Ascending aorta (tissue), 2 donors: ENCODE measurements at regions of chr6 and their contacts with region 1.

Region 1: GRCh38 chr6:157274471-157275226 is 48.7 kb downstream of the TMEM242 start:
- DNase-seq: peak; percentile 53 to 91
- H3K4me3 ChIP-seq: peak overlapping the region; percentile 75 to 86
- H3K27ac ChIP-seq: peak overlapping the region; percentile 97 to 98
- H3K4me1 ChIP-seq: peaks cover under 1 to 24% of the 10 kb centered on the region in 2 donors
- H3K27me3 ChIP-seq: no peaks in the 10 kb centered on the region
- CTCF ChIP-seq: peak in 2 of 3 experiments; percentile 49 to 99

Region 2: DNA sequence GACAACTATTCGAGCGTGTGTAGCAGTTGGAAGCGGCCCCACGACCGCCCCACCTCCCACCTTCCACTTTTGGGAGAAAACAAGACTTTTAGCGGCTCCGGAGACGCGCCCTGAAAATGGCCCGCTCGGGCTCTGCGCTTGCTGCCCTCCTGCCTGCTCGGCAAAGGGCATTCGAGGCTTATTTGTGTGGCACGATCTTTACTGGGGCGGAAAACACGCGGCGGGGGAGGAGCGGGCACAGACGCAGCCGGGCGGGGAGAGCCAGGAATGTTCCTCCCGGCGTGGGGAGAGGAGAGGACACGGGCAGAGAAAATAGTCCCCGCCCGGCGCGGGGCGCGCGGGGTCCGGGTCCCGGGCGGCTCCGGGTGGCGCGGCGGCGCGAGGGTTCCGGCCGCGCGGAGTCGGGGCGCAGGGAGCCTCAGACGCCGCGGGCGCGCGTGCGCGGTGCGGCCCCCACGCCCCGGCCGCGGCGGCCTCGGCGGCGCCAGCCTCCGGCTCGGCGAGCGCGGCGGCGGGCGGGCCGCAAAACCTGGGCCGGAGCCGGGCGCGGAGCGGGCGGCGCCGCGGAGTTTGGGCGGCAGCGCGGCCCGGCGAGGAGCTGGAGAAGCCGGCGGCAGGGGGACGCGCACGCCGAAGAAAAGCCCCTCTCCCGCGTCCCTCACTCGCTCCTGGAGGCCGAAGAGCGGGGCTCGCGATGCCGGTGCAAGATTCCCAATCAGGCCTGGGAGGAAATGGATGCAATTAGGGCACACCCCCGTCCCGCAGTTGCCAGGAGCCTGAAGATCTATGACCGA is 587.5 kb before region 1 on chr6:
- intact Hi-C with region 1: loop called (anchors 2 kb)
- DNase-seq: peak; percentile 77 to 97
- H3K4me3 ChIP-seq: peak overlapping the region; percentile 71 to 93
- H3K27ac ChIP-seq: peak overlapping the region; percentile 97
- H3K4me1 ChIP-seq: peaks cover 0 to 6% of the 10 kb centered on the region in 2 donors
- H3K27me3 ChIP-seq: no peaks in the 10 kb centered on the region
- CTCF ChIP-seq: no peak

Region 3: GRCh38 chr6:157034436-157035230 is 240.0 kb before region 1 on chr6:
- intact Hi-C with region 1: loop called (anchors 1 kb)
- DNase-seq: no peak
- H3K4me3 ChIP-seq: no peak overlapping the region
- H3K27ac ChIP-seq: no peak overlapping the region
- H3K4me1 ChIP-seq: peaks cover 4 to 39% of the 10 kb centered on the region in 2 donors
- H3K27me3 ChIP-seq: no peaks in the 10 kb centered on the region
- CTCF ChIP-seq: peak; percentile 54 to 62 (median 61)

Region 4: DNA sequence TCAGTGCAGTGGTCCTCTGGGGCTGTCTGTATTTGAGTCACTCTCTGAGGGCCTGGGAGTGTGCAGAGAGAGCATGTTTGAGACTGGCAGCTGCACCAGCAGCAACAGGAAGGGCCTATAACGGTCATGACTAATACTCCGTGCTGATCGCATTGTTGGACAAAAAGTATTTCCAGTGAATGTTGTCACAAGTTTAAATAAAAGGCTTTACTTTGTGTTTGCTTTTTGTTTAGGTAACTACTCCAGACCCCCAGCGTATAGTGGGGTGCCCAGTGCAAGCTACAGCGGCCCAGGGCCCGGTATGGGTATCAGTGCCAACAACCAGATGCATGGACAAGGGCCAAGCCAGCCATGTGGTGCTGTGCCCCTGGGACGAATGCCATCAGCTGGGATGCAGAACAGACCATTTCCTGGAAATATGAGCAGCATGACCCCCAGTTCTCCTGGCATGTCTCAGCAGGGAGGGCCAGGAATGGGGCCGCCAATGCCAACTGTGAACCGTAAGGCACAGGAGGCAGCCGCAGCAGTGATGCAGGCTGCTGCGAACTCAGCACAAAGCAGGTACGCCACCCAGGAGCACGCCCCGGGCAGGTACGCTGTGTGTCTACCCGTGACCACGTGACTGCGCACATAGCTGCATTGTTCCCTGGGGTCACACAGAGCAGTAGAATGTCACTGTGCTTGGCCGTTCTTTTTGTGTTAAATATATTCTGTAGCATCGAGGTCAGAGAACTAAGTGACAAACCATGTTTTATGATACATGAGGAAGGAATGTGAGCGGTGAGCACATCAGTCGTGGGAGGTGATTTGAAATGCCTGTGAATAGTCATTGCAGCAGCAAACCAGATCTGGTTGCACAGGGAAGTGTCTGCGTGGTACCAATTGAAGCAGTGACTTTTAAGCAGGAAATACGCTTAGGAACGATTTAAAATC is 126.0 kb before region 1 on chr6:
- intact Hi-C with region 1: loop called (anchors 2 kb)
- DNase-seq: peak; percentile 42 to 89
- H3K4me3 ChIP-seq: peak overlapping the region; percentile 28 to 33
- H3K27ac ChIP-seq: peak overlapping the region; percentile 87 to 88
- H3K4me1 ChIP-seq: peaks cover 19 to 51% of the 10 kb centered on the region in 2 donors
- H3K27me3 ChIP-seq: no peaks in the 10 kb centered on the region
- CTCF ChIP-seq: no peak

Region 5: DNA sequence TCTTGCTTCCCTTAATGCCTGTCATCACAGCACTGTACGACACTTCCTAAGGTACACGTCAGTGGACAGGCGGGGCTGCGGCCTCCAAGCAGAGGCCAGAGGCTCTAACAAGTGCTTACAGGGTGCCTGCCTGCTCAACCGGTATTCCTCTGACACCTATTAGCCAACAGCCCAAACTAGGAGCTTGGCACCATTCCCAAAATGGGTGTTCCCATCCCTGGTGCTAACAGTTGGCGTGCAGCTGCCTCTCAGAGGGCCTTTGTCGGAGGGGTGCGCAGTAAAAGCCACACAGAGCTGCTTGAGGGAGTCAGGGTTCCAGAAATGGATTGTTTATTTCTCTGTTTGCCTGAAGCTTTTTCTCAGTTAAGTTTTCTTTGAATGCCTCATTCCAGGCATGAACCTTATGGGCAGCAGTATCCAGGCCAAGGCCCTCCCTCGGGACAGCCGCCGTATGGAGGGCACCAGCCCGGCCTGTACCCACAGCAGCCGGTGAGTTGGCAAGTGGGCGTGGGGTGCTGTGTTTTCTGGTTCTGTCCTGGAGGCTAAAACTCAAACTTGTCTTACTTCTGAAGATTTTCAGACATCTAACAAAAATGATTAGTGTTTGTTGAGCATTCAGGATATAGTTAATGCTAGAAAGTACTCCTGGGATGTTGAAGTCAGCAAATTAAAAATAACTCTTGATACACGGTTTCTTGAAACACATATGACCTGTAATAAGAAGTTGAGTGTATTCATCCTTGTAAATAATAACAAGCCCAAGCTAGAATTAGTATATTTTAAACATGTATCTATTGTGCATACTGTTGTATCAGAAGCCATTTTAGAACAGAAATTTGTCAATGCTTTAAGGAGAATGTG is 76.0 kb before region 1 on chr6:
- intact Hi-C with region 1: loop called (anchors 1 kb)
- DNase-seq: peak; percentile 67 to 93
- H3K4me3 ChIP-seq: peak overlapping the region; percentile 36 to 51
- H3K27ac ChIP-seq: peak overlapping the region; percentile 78 to 89
- H3K4me1 ChIP-seq: peaks cover 3 to 9% of the 10 kb centered on the region in 2 donors
- H3K27me3 ChIP-seq: no peaks in the 10 kb centered on the region
- CTCF ChIP-seq: no peak

Region 6: DNA sequence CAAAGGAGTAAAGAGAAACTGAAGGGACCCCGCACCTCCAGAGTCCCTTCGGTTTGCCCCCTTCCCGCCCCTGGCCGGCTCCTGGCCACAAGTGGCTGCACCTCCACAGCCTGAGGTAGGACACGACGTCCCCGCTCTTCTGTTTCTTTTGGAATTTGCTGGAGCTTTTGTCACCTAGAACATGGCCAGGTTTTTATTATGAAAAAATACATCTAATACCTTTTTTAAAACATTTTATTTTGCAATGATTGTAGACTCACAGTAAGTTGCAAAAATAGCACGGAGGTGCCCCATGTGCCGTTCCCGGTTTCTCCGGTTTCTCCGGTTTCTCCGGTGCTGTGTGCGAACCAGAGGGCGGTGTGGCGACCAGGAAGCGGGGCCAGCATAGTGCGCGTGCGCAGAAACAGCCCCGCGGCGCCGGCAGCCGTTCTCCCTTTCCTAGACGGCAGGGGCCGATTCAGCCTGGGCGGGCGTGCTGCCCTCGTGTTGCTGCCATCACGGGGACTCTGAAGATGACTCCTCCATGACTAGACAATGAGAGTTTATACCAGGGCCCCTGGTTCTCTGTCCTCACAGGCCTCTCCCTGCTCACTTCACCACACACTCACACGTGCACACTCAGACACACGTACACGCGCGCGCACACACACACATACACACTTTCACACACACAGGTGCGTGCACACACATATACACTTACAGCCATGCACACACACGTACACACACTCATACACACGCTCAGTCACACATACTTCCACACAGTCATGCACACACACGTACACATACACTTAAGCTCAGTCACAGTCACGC is 53.4 kb before region 1 on chr6:
- intact Hi-C with region 1: loop called (anchors 2 kb)
- DNase-seq: peak in 1 of 2 donors; percentile 91
- H3K4me3 ChIP-seq: peak overlapping the region; percentile 38 to 56
- H3K27ac ChIP-seq: peak overlapping the region; percentile 76 to 87
- H3K4me1 ChIP-seq: peaks cover 14 to 53% of the 10 kb centered on the region in 2 donors
- H3K27me3 ChIP-seq: no peaks in the 10 kb centered on the region
- CTCF ChIP-seq: peak in 2 of 3 experiments; percentile 19 to 37

Region 7: GRCh38 chr6:157235600-157236039 is 39.0 kb before region 1 on chr6:
- intact Hi-C with region 1: loop called (anchors 1 kb)
- DNase-seq: peak; percentile 45 to 88
- H3K4me3 ChIP-seq: peak overlapping the region; percentile 59 to 64
- H3K27ac ChIP-seq: peak overlapping the region; percentile 96
- H3K4me1 ChIP-seq: peaks cover 7 to 28% of the 10 kb centered on the region in 2 donors
- H3K27me3 ChIP-seq: no peaks in the 10 kb centered on the region
- CTCF ChIP-seq: peak; percentile 81 to 87 (median 87)